ENCODE measurements at regions of chr9 and their contacts with region 1.

Region 1: DNA sequence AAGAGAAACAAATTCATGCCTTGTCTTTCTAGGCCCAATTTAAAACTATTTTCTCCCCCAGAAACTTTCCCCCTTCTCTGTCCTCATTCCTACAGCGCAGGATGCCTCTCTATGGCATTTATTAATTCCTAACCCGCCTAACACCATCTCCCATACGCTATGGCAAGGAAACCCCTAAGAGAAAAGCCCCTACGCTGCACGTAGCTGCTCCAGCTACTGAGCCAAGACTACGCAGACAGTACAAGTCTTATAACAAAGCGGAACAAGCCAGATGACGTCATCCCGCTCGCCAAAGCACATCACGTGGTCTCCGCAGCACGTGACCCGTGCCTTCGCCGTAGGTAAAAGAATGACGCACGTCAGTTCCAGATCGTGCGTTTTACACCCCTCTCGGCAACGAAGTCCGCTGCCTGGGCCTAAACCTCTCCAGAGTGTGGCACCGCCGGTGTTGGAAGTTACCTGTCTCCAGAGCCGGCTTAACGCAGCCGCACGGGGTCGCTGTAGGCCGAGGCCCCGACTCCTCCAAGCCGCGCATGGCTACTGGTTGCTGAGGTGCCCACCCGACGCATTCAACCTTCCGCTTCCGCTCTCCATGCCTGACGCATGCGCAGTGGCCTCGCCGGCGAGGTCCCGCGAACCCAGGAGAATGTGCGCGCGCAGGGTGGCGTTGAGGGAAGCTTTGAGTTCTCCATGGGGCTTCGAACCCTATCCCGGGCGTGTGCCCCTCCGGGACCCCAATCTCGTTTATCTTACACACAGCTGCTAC is at the start of gene TRMO:
- DNase-seq: peak; percentile 99
- ATAC-seq: peak; percentile 96
- total RNA-seq, gene TRMO: 6.5 TPM

Region 2: DNA sequence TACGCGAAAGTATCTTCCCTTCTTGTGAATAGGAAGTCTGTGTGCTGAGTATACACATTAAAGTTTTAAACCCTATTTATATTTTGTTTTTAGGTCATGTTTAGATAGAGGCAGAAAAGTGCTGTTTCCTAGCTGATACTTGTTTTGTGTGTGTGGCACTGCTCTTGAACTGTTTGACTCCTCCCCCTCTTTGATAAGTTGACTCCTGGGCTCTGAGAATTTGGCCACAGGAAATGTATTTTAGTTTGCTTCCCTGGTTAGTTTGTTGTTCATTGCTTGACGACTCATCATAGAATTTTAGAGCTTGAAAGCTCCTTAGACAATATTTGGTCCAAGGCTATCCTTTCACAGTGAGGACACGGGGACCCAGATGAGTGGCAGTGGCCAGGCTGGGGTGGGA is 1300.5 kb before region 1 on chr9:
- intact Hi-C with region 1: no loop called
- DNase-seq: no peak
- ATAC-seq: no peak

Region 3: DNA sequence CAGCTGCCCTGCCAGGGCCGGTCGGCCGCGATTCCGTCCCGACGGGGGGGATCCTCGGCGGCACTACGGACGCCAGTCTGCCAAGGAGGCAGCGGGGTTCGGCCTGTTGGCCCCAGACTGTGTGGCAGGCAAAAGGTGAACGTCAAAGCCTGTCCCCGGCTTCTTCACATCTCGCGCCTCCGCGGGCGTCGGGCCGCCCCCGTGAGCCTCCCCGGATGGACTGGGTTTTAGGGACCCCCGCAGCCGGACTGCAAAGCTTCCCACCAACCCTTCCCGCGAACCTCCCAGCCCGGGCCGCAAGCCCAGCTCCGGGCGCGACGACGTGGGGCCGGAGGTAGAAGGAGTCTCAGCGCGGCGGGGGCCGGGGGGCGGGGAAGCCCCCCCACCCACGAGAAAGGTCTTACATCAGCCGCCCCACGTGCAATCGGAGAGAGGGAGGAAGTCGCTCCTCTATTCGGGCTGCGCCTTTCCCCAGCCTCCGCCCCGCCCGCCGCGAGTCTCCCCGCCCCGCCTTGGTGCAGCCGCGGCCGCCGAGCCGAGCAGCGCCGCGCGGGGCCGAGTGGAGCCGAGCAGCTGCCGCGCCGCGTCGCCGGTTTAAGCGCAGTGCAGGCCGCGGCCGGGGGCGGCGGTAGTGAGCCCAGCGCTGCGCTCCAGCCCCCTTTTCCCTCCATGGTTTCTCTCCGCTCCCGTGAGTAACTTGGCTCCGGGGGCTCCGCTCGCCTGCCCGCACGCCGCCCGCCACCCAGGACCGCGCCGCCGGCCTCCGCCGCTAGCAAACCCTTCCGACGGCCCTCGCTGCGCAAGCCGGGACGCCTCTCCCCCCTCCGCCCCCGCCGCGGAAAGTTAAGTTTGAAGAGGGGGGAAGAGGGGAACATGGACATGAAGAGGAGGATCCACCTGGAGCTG is 60.8 kb after region 1 on chr9 and contains the start of gene ANP32B:
- intact Hi-C with region 1: loop called (anchors 1 kb)
- DNase-seq: peak; percentile 96
- ATAC-seq: peak; percentile 94
- total RNA-seq, gene ANP32B: 54.5 TPM

Region 4: DNA sequence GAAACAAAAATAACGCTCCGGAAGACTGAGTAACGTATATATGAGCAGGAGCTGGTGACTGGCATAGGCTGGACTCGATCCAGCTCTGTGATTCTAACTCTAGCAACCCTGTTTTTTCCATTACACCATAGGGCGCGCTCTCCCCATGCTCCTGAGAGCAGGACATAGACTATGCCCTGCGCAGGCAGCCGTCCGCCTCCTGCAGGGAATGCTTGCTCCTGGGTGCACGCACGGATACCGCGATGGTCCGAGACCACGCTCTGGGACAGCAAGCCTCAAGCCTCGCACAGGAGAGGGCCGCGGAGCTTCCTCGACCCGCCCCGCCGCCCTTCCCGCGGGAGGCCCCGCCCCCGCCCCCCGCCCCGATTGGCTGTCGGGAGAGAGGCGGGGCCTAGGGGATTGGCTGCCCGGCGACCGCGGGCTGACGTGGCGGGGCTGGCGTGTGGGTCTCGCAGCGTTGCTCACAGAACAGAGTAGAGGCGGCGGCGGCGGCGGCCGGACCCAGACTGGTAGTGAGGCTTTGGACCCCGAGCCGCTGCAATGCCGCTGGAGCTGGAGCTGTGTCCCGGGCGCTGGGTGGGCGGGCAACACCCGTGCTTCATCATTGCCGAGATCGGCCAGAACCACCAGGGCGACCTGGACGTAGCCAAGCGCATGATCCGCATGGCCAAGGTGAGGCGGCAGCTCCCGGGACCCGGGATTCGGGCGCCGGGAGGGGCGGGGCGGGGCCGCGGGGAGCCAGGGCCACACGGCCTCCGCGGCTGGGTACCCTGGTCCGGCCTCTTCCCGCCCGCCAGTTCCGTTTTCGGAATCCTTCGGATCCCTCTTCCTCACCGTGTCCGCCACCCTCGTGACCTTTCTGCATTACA is 134.4 kb after region 1 on chr9 and contains the start of gene NANS:
- intact Hi-C with region 1: loop called (anchors 2 kb)
- DNase-seq: peak; percentile 96
- ATAC-seq: peak; percentile 99
- total RNA-seq, gene NANS: 37.2 TPM

Region 5: DNA sequence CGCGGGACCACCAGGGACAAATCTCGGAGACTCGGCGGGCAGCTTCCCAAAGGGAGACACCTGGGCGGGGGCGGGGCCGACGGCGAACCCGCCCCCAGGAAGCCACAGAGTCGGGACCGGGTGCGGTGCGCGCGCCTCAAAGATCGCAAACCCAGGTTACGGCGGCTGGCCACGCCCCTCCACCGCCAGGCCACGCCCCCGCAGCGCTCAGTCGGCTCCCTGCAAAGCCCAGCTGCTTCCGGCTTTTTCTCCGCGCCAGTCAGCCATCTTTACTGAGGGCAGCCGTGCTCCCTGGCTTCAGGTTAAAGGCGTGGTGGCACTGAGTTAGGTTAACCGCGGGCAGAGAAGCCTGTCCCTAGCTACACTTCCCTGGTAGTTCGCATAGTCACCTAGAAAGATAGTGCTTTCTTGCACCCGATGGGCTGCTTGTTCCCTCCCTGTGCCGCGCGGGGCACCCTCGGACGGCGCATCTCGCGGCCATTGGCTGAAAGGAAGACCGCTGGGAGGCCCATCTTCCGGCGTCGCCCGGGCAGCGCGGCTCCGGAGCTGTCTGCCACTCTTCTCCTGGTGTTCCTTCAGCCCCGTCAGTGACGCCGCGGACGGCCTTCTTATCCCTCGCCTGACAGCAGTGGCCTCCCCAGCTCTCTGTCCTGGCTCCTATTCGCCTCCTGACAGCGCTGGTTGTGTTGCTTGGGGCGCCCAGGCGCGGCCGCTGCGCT is 333.6 kb after region 1 on chr9 and contains the start of gene TBC1D2:
- intact Hi-C with region 1: loop called (anchors 1 kb)
- DNase-seq: peak; percentile 98
- ATAC-seq: peak; percentile 98
- total RNA-seq, gene TBC1D2: 2.3 TPM